Gastrocnemius medialis (tissue), 4 donors: ENCODE measurements at regions of chr7 and their contacts with region 1.

Region 1: DNA sequence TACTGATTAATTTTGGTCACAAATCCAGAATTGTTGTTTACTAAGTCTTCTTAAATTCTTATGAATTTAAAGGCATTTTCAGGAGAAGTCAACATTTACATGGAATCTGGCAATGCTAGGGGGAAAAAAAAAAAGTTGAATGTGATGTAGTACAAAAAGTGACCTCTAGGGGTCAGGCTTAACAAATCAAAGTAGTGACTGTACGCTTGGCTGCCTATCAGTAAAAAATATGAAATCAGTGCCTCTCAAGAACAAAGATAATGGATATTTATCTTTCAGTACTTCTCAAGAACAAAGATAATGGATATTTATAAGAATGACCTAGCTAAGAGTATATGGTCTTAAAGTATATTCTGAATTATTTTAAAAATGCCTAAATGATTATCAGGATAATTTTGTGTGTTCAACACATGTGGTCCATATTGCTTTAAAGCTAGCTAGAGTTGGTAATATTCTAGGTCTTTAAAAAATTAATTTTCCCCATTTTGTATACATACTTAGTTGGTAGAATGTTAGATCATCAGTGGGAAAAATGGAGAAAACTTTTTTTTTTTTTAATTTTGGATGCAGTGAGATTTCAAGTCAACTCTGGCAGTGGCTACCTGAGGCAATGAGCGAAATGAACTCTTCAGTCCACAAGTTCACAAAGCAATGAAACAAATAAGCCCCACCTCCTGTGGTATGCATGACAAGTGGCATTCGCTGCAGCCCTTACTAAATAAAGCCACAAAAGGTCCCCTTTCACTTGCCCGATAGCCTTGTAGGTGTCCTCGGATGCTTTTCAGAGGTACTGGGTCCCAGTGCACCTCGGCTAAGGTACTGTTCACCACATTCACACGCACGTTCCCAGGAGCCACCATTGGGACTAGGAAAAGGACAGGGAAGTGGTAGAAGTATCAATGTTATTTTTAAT is 51.2 kb upstream of the LAMB4 start:
- DNase-seq: no peak
- ATAC-seq: peak in 1 of 2 donors; percentile 56
- H3K4me3 ChIP-seq: no peak overlapping the region
- H3K27ac ChIP-seq: no peak overlapping the region
- H3K4me1 ChIP-seq: no peaks in the 10 kb centered on the region
- H3K27me3 ChIP-seq: no peaks in the 10 kb centered on the region
- CTCF ChIP-seq: peak; percentile 43 to 76 (median 65)
- POLR2A ChIP-seq: no peak

Region 2: GRCh38 chr7:108459931-108460551 is 278.7 kb after region 1 on chr7:
- in situ Hi-C with region 1: no loop called
- intact Hi-C with region 1: loop called (anchors 10 kb)
- DNase-seq: no peak
- ATAC-seq: no peak
- H3K4me3 ChIP-seq: no peak overlapping the region
- H3K27ac ChIP-seq: no peak overlapping the region
- H3K4me1 ChIP-seq: peaks cover 0 to 8% of the 10 kb centered on the region in 2 donors
- H3K27me3 ChIP-seq: peaks cover 23 to 36% (median 35%) of the 10 kb centered on the region in 3 donors
- CTCF ChIP-seq: no peak
- POLR2A ChIP-seq: no peak

Region 3: DNA sequence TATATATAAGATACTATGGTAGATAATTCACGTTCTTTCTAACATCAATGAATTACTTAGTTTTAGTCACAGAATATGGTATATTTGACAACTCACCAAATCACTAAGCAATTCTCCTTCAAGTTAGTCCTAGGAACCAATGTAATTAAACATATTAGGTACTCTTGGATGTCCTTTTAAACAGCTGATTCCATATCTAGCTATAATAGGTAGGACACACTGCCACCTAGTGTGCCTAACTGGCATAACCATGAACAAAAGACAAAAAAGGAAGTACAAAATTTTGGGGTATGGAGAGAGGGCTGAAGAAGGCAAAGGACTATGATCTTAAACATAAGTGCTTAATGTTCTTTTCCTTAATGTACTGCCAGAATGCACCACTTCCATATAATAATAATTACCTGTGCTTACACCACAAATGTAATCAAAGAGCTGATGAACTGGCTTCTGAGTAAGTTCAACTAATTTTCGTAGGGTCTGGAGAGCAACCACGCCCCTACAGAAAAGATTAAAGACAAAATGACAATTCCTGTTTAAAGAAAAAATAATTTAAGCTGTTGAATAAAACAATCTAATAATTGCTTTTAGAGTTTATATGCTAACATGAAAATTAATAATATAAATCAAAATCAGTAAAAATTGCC is 315.9 kb after region 1 on chr7:
- in situ Hi-C with region 1: loop called in 3 of 4 experiments (anchors 5 to 25 kb)
- intact Hi-C with region 1: no loop called
- DNase-seq: no peak
- ATAC-seq: peak in 1 of 2 donors; percentile 30
- H3K4me3 ChIP-seq: no peak overlapping the region
- H3K27ac ChIP-seq: no peak overlapping the region
- H3K4me1 ChIP-seq: no peaks in the 10 kb centered on the region
- H3K27me3 ChIP-seq: no peaks in the 10 kb centered on the region
- CTCF ChIP-seq: peak; percentile 37 to 83 (median 58)
- POLR2A ChIP-seq: no peak